ENCODE measurements at regions of chr11 and their contacts with region 1.

Region 1: GRCh38 chr11:94834911-94835593 is 66.9 kb downstream of the AMOTL1 start:
- DNase-seq: no peak
- ATAC-seq: no peak
- H3K4me3 ChIP-seq: no peak overlapping the region
- H3K27ac ChIP-seq: peak overlapping the region; percentile 26
- H3K4me1 ChIP-seq: peaks cover 7% of the 10 kb centered on the region
- H3K27me3 ChIP-seq: no peaks in the 10 kb centered on the region

Region 2: GRCh38 chr11:94776351-94777321 is 58.4 kb before region 1 on chr11:
- intact Hi-C with region 1: loop called in 1 of 4 experiments (anchors 10 kb)
- DNase-seq: peak; percentile 33 to 68 (median 60)
- ATAC-seq: peak; percentile 48 to 61
- H3K4me3 ChIP-seq: no peak overlapping the region
- H3K27ac ChIP-seq: no peak overlapping the region
- H3K4me1 ChIP-seq: peaks cover 11% of the 10 kb centered on the region
- H3K27me3 ChIP-seq: no peaks in the 10 kb centered on the region

Region 3: GRCh38 chr11:94794287-94795168 is 40.5 kb before region 1 on chr11:
- intact Hi-C with region 1: loop called in 1 of 4 experiments (anchors 5 kb)
- DNase-seq: peak; percentile 81 to 89 (median 83)
- ATAC-seq: peak; percentile 88 to 93
- H3K4me3 ChIP-seq: no peak overlapping the region
- H3K27ac ChIP-seq: peak overlapping the region; percentile 94
- H3K4me1 ChIP-seq: peaks cover 24% of the 10 kb centered on the region
- H3K27me3 ChIP-seq: no peaks in the 10 kb centered on the region